Endothelial cell of umbilical vein (primary cell): ENCODE measurements at regions of chr1 and their contacts with region 1.

Region 1: GRCh38 chr1:27858072-27858958 is 14.0 kb upstream of the THEMIS2 start:
- DNase-seq: peak; percentile 81
- H3K4me3 ChIP-seq: no peak overlapping the region
- H3K27ac ChIP-seq: no peak overlapping the region
- H3K4me1 ChIP-seq: peaks cover under 1% of the 10 kb centered on the region
- H3K27me3 ChIP-seq: no peaks in the 10 kb centered on the region
- CTCF ChIP-seq: peak; percentile 93 to 97
- POLR2A ChIP-seq: no peak

Region 2: GRCh38 chr1:27192039-27192529 is 666.2 kb before region 1 on chr1:
- CTCF ChIA-PET with region 1: no interaction called
- POLR2A ChIA-PET with region 1: no interaction called
- dilution Hi-C with region 1: no loop called
- intact Hi-C with region 1: no loop called
- DNase-seq: no peak
- H3K4me3 ChIP-seq: no peak overlapping the region
- H3K27ac ChIP-seq: no peak overlapping the region
- H3K4me1 ChIP-seq: no peaks in the 10 kb centered on the region
- H3K27me3 ChIP-seq: no peaks in the 10 kb centered on the region
- CTCF ChIP-seq: no peak
- POLR2A ChIP-seq: no peak

Region 3: DNA sequence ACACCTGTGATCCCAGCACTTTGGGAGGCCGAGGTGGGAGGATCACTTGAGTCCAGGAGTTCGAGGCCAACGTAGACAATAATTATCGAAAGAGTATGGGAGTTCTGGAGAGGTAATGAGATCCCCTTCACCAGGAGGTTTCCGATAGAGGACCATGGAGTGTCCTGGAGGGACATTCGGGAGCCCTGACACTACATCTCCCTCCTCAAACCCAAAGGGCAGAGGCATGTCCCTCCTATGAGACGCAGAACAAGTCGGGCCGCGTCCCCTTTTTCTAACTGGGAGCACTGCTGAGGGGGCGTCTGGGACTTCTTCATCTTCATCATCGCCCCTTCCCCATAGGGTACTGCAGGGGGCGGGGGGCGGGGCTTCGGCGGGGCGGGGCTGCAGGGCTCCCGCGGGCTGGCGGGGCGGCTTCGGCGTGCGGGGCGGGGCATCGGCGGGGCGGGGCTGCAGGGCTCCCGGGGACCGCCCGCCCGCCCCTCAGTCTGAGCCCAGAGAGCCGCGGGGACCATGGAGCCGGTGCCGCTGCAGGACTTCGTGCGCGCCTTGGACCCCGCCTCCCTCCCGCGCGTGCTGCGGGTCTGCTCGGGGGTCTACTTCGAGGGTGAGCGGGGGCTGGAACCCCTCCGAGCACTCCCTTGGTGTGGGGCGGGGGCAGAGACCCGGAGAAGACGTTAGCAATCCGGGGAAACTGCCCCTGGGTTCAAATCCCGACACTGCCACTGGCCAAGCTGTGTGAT is 13.9 kb after region 1 on chr1 and contains the start of gene THEMIS2:
- CTCF ChIA-PET with region 1: interaction called, 11 read pairs
- POLR2A ChIA-PET with region 1: no interaction called
- dilution Hi-C with region 1: no loop called
- intact Hi-C with region 1: no loop called
- DNase-seq: peak; percentile 52
- H3K4me3 ChIP-seq: peak within 1 kb of the TSS; percentile 59 to 78 (median 77)
- H3K27ac ChIP-seq: no peak within 1 kb of the TSS
- H3K4me1 ChIP-seq: peaks cover 9% of the 10 kb centered on the region
- H3K27me3 ChIP-seq: no peaks in the 10 kb centered on the region
- CTCF ChIP-seq: no peak
- POLR2A ChIP-seq: peak; percentile 33
- total RNA-seq, gene THEMIS2: 6.3 and 11.1 TPM in 2 replicates

Region 4: GRCh38 chr1:27959400-27960217 is 101.3 kb after region 1 on chr1 and contains the start of gene XKR8:
- CTCF ChIA-PET with region 1: interaction called, 3 read pairs
- POLR2A ChIA-PET with region 1: no interaction called
- dilution Hi-C with region 1: no loop called
- intact Hi-C with region 1: loop called (anchors 1 kb)
- DNase-seq: peak; percentile 82
- H3K4me3 ChIP-seq: peak within 1 kb of the TSS; percentile 56 to 71 (median 60)
- H3K27ac ChIP-seq: peak within 1 kb of the TSS; percentile 74
- H3K4me1 ChIP-seq: peaks cover 18% of the 10 kb centered on the region
- H3K27me3 ChIP-seq: no peaks in the 10 kb centered on the region
- CTCF ChIP-seq: peak; percentile 41 to 68
- POLR2A ChIP-seq: peak; percentile 83
- total RNA-seq, gene XKR8: 10.0 TPM in 2 replicates

Region 5: GRCh38 chr1:27979151-27979858 is 121.0 kb after region 1 on chr1:
- CTCF ChIA-PET with region 1: interaction called, 99 read pairs
- POLR2A ChIA-PET with region 1: no interaction called
- dilution Hi-C with region 1: no loop called
- intact Hi-C with region 1: loop called (anchors 1 kb)
- DNase-seq: peak; percentile 82
- H3K4me3 ChIP-seq: no peak overlapping the region
- H3K27ac ChIP-seq: peak overlapping the region; percentile 36
- H3K4me1 ChIP-seq: peaks cover 3% of the 10 kb centered on the region
- H3K27me3 ChIP-seq: no peaks in the 10 kb centered on the region
- CTCF ChIP-seq: peak; percentile 22 to 31
- POLR2A ChIP-seq: no peak

Region 6: DNA sequence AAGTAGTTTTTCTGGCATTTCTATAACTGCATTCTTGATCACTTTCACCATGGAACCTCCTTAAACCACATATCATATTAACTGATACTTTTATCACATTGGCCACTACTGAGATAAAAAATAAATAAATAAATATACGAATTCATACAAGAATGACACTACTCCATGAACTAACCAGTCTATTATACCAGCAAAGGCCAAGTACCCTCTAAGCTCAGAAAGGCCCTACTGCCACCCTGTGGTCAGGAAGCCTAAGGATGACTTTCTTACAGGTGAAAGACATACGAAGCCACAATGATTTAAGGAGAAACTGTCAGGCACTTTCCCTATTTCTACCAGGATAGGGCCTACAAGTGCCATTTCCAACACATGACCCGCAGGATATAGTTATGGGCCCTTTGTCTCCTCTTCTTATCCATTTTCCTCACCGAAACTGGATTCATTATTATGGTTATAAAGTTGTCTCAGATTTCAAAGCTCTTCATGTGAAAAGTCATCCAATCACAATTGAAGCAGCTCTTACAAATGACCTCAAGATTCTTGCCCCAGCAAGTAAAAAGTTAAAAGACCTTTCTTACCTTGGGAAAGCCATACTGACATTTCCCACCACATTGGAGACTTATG is 350.6 kb after region 1 on chr1:
- CTCF ChIA-PET with region 1: interaction called, 28 read pairs
- POLR2A ChIA-PET with region 1: interaction called, 9 read pairs
- dilution Hi-C with region 1: no loop called
- intact Hi-C with region 1: loop called (anchors 1 kb)
- DNase-seq: peak; percentile 78
- H3K4me3 ChIP-seq: no peak overlapping the region
- H3K27ac ChIP-seq: no peak overlapping the region
- H3K4me1 ChIP-seq: no peaks in the 10 kb centered on the region
- H3K27me3 ChIP-seq: no peaks in the 10 kb centered on the region
- CTCF ChIP-seq: peak; percentile 55 to 64
- POLR2A ChIP-seq: no peak